Activated CD4-positive, alpha-beta T cell treated with anti-CD3 and anti-CD28 coated beads for 36 hours (primary cell): ENCODE measurements at regions of chr5 and their contacts with region 1.

Region 1: GRCh38 chr5:159286420-159287035 is 23.4 kb downstream of the UBLCP1 start:
- DNase-seq: no peak
- ATAC-seq: peak; percentile 63
- H3K4me3 Mint-ChIP-seq: no peak overlapping the region
- H3K27ac Mint-ChIP-seq: no peak overlapping the region
- H3K4me1 Mint-ChIP-seq: no peaks in the 10 kb centered on the region
- H3K27me3 Mint-ChIP-seq: no peaks in the 10 kb centered on the region

Region 2: GRCh38 chr5:159316519-159317383 is 30.2 kb after region 1 on chr5:
- CTCF ChIA-PET with region 1: interaction called, 22 read pairs
- POLR2A ChIA-PET with region 1: no interaction called
- intact Hi-C with region 1: loop called in 1 of 2 experiments (anchors 1 kb)
- DNase-seq: peak; percentile 65
- ATAC-seq: peak; percentile 81
- H3K4me3 Mint-ChIP-seq: no peak overlapping the region
- H3K27ac Mint-ChIP-seq: no peak overlapping the region
- H3K4me1 Mint-ChIP-seq: no peaks in the 10 kb centered on the region
- H3K27me3 Mint-ChIP-seq: peaks cover 2% of the 10 kb centered on the region